Astrocyte of the cerebellum (primary cell): ENCODE measurements at regions of chr2 and their contacts with region 1.

Region 1: DNA sequence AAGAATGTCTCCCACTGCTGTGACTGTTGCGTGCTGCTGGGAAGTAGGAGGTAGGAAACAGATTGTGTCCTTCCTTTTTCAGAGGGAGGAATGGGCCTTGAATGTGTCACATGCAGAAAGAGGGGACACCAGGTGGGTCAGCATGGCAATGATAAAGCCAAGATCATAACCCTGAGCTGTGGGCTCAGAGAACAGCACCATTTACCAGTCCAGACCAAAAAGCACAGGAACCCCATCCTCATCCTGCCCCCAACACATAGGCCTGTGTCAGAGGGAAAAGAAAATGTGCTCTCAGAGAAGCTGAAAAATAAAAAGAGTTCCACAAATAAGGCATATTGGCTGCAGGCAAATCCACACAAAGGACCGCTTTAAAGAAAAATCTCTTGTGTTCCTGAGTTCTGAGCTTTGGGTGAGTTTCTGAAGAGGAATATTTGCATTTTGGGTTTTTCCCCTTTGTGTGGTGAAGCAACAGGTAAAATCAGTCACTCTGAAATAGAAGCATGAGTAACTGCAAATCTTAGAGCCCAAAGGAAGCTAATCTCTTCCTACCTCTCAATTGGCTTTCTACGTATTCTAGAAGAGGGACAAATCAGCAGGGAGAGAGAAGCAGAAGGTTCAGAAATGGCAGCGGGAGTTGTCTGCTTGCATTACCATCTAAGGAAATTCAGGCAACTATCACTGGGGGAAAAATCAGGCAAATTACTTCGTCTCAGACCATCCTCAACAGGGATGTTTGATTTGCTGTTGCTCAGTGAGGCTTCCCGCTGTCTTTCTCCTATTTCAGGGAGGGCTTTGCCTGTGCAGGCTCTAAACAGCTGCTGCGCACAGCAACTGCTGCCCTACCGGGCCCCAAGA is 106.8 kb downstream of the BCL11A start:
- DNase-seq: no peak
- H3K4me3 ChIP-seq: no peak overlapping the region
- CTCF ChIP-seq: no peak

Region 2: DNA sequence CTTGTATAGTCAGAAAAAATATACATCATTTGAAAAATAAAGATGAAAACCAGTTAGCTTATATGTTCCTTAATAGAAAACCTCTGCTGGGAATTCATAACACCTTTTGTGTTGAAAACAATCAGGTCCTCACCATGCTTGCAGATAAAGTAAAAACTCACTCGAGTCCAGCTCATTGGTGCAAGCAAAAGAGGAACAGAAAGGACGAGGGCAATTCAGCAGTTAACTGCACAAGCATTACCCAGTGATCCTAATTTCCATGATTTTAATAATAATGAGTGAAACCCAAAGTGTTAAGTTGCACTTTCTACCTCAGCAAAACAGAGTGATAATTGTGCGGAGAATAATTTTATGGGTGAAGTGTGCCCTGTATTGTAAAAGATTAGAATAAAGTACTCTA is 733.1 kb before region 1 on chr2:
- in situ Hi-C with region 1: no loop called
- DNase-seq: no peak
- H3K4me3 ChIP-seq: no peak overlapping the region
- CTCF ChIP-seq: no peak

Region 3: DNA sequence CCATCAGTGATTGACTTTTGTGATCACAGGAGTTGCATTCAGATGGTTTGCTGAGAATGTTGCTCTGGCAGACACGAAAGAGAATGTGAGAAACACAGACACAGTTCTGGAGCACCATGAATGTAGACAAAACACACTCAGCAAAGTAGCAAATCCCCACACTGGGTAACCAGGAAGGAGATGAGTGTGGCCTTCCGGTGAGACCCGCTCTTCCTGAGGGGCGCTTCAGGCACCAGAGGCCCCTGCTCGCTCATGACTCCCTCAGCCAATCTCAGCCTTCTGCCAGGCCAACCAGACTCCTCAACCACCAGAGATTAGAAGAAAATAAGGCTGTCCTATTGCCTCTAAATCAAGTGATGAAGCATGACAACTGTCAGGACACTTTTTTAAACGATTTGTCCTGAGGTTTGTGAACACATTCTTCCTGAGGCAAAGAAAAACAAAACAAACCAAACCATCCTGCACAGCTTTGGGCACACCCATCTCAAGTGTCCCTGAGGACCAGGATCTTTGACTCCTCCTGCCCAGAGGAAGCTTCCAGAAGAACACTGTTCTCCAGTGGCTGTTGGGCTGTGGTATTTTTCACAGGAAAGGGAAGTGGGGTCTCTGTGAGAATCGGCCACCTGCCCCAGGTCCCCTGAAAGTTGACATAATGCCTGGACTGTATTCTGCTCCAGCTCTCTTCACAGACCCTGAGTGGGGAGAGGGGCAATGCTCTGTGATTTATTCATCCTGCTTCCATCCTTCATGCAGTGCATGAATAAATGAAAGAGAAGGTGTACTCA is 46.0 kb before region 1 on chr2:
- in situ Hi-C with region 1: loop called (anchors 5 kb)
- DNase-seq: no peak
- H3K4me3 ChIP-seq: no peak overlapping the region
- CTCF ChIP-seq: no peak

Region 4: DNA sequence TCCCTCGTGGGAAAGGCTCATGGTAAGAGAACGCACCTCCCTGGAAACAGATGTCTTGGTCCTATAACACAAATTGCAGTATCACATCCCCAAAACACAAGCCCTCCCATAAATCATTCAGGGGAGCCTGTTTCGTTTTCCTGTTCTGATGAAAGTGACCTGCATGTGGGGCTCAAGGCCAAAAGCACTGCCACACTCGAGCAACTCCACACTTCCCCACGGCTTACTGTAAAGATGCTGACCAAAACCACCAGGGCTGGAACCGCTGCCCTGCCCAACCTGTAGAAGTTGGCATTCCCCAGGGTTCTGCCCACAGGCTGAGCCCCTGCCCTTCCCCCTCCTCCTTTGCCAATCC is 32.8 kb before region 1 on chr2:
- in situ Hi-C with region 1: no loop called
- DNase-seq: no peak
- H3K4me3 ChIP-seq: no peak overlapping the region
- CTCF ChIP-seq: no peak